Stomach (tissue), 19 donors: ENCODE measurements at regions of chr20 and their contacts with region 1.

Region 1: GRCh38 chr20:24157213-24157612 is 168.6 kb upstream of the GGTLC1 start:
- DNase-seq: no peak
- H3K4me3 ChIP-seq: no peak overlapping the region
- H3K27ac ChIP-seq: no peak overlapping the region
- H3K4me1 ChIP-seq: no peaks in the 10 kb centered on the region
- H3K27me3 ChIP-seq: peaks cover 0 to 9% (median 0%) of the 10 kb centered on the region in 3 donors
- CTCF ChIP-seq: no peak
- EP300 ChIP-seq: no peak
- POLR2A ChIP-seq: no peak

Region 2: DNA sequence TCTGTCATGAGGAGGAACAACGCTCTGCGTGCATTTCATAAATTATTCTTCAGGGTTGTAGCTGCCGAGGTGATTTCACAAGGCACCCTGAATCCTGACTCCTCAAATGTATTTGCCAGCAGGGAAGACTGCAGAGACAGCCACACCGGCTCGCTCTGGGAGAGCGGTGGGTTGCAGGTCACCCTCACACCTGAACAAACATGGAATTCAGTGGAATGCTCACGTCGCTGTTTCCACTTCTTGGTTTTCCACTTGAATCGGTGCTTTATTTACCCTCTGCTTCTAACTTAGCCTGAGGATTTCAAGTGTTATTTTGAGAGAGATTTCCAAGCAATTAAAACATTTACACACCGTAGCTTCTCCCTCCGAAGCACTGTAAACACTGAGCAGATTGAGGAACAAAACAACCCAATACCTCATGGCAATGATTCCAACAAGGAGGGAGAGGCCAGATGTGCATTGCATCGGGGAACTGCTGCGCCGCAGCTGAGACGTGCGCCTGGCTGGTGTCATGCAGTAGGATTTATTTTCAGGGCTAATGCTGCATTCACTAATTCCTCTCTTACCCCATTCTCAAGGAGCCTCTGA is 109.1 kb before region 1 on chr20:
- intact Hi-C with region 1: no loop called
- DNase-seq: peak in 1 of 2 donors; percentile 12
- H3K4me3 ChIP-seq: no peak overlapping the region
- H3K27ac ChIP-seq: no peak overlapping the region
- H3K4me1 ChIP-seq: no peaks in the 10 kb centered on the region
- H3K27me3 ChIP-seq: peaks cover 0 to 28% (median 0%) of the 10 kb centered on the region in 3 donors
- CTCF ChIP-seq: no peak
- EP300 ChIP-seq: no peak
- POLR2A ChIP-seq: no peak

Region 3: DNA sequence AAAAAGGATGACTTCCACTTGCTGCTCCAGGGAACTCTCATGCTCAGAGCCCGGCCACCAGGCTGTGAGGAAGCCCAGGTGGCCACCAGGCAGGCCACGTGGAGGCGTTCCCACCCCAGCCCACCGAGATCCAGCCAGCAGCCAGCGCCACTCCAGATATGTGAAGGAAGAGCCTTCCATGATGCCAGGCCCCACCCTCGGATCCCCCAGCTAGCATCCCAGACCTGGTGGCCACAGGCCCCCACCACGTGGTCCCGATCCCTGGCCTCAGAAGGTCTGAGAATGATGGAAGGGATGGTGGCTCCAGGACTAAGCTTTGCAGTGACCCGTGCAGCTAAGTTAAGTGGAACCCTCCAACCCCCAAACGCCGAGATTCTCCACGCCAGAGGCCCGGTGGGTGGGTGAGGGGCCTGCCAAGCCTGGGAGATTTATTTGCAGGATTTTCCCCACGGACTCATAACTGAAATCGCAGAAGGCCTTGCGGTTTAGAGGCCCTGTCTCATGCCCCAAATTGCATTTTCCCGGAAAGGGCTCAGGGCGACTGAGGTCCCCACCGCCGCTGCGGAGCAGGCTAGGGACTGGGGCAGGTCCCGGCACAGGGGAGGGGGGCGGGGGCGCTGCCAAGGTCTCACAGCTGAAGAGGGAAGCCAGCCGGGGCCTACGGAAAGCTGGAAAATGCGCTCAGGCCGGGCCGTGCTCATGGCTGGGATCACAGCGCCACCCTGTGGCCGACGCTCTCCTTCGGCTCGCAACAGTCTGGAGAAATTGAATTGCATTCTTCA is 760.8 kb after region 1 on chr20:
- intact Hi-C with region 1: loop called (anchors 5 kb)
- DNase-seq: peak; percentile 78 to 94
- H3K4me3 ChIP-seq: peak overlapping the region in 1 of 4 donors; percentile 18
- H3K27ac ChIP-seq: no peak overlapping the region
- H3K4me1 ChIP-seq: peaks cover 3 to 14% (median 11%) of the 10 kb centered on the region in 4 donors
- H3K27me3 ChIP-seq: no peaks in the 10 kb centered on the region
- CTCF ChIP-seq: peak in 5 of 7 experiments; percentile 64 to 85 (median 79)
- EP300 ChIP-seq: no peak
- POLR2A ChIP-seq: no peak